Body of pancreas (tissue), 4 donors: ENCODE measurements at regions of chr14 and their contacts with region 1.

Region 1: GRCh38 chr14:74349757-74350156 is 1.5 kb downstream of the VRTN start:
- DNase-seq: peak; percentile 53 to 82 (median 66)
- ATAC-seq: peak; percentile 77
- H3K4me3 ChIP-seq: no peak overlapping the region
- H3K27ac ChIP-seq: no peak overlapping the region
- H3K4me1 ChIP-seq: peaks cover 23% of the 10 kb centered on the region
- H3K27me3 ChIP-seq: no peaks in the 10 kb centered on the region
- CTCF ChIP-seq: no peak
- POLR2A ChIP-seq: no peak

Region 2: GRCh38 chr14:74488786-74489397 is 139.1 kb after region 1 on chr14:
- intact Hi-C with region 1: loop called (anchors 10 kb)
- DNase-seq: no peak
- ATAC-seq: no peak
- H3K4me3 ChIP-seq: no peak overlapping the region
- H3K27ac ChIP-seq: no peak overlapping the region
- H3K4me1 ChIP-seq: peaks cover 22% of the 10 kb centered on the region
- H3K27me3 ChIP-seq: no peaks in the 10 kb centered on the region
- CTCF ChIP-seq: no peak
- POLR2A ChIP-seq: no peak